ENCODE measurements at regions of chr11 and their contacts with region 1.

Region 1: GRCh38 chr11:61446211-61446651 is 16.3 kb downstream of the SDHAF2 start:
- DNase-seq: peak; percentile 98
- ATAC-seq: peak; percentile 99
- H3K4me3 ChIP-seq: no peak overlapping the region
- H3K27ac ChIP-seq: no peak overlapping the region
- H3K4me1 ChIP-seq: 0 out of 2 replicates have a peak, but pooled peaks cover 3% of the 10 kb centered on the region
- H3K27me3 ChIP-seq: no peaks in the 10 kb centered on the region
- CTCF ChIP-seq: peak; percentile 98

Region 2: GRCh38 chr11:61472282-61472681 is 26.1 kb after region 1 on chr11:
- CTCF ChIA-PET with region 1: interaction called, 12 read pairs
- POLR2A ChIA-PET with region 1: no interaction called
- intact Hi-C with region 1: loop called (anchors 2 kb)
- DNase-seq: no peak
- ATAC-seq: no peak
- H3K4me3 ChIP-seq: no peak overlapping the region
- H3K27ac ChIP-seq: no peak overlapping the region
- H3K4me1 ChIP-seq: peaks cover 4% of the 10 kb centered on the region; the same call in 1 of the 2 replicates
- H3K27me3 ChIP-seq: no peaks in the 10 kb centered on the region
- CTCF ChIP-seq: no peak

Region 3: DNA sequence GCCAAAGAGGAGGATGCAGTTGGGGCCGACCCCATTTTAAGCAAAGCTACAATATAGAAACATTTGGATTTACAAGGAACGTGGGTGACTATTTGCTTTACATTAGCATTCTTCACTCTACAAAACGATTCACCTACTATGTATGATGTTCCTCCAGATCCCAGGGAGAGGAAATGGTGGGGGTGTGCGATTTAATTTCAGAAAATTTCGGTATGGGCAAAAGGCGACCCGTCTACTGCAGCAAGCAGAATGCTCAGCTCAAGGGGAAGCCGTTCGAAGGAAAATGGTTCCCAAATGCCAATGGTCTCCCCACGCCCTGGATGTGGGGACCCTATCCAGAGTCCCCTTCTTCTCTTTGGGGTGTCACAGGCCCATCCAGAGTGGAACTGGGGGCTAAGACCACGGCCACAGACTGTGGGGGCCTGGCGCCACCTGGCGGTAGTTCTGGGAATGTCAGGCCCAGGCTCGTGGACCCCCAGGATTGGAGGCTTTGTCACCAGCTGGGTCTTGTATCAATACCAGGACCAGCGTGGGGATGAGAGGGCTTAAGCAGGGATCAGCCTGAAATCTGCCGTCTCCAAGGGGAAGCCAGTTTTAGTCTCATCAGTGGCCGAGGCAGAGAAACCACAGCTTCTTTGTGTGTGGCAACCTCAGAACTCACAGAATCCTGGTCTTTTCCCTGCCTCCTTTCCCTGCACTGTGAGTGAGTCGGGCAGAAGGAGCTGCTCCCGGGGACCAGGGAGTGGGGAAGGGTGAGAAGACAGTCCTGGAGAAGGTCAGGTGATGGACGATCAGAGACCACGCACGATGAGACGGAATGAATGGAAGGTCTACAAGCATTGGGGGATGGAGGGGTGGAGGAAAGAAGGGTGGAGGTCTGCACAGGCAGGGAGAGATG is 70.7 kb after region 1 on chr11:
- CTCF ChIA-PET with region 1: interaction called, 12 read pairs
- POLR2A ChIA-PET with region 1: no interaction called
- intact Hi-C with region 1: loop called (anchors 2 kb)
- DNase-seq: peak; percentile 43
- ATAC-seq: peak; percentile 28; the same call in 1 of the 2 replicates
- H3K4me3 ChIP-seq: no peak overlapping the region
- H3K27ac ChIP-seq: no peak overlapping the region
- H3K4me1 ChIP-seq: peaks cover 11% of the 10 kb centered on the region
- H3K27me3 ChIP-seq: no peaks in the 10 kb centered on the region
- CTCF ChIP-seq: peak; percentile 99

Region 4: GRCh38 chr11:61627567-61628445 is 181.6 kb after region 1 on chr11:
- CTCF ChIA-PET with region 1: no interaction called
- POLR2A ChIA-PET with region 1: no interaction called
- intact Hi-C with region 1: loop called (anchors 2 kb)
- DNase-seq: peak; percentile 89
- ATAC-seq: peak; percentile 78
- H3K4me3 ChIP-seq: no peak overlapping the region
- H3K27ac ChIP-seq: peak overlapping the region; percentile 85
- H3K4me1 ChIP-seq: peaks cover 23% of the 10 kb centered on the region
- H3K27me3 ChIP-seq: no peaks in the 10 kb centered on the region
- CTCF ChIP-seq: peak; percentile 98

Region 5: DNA sequence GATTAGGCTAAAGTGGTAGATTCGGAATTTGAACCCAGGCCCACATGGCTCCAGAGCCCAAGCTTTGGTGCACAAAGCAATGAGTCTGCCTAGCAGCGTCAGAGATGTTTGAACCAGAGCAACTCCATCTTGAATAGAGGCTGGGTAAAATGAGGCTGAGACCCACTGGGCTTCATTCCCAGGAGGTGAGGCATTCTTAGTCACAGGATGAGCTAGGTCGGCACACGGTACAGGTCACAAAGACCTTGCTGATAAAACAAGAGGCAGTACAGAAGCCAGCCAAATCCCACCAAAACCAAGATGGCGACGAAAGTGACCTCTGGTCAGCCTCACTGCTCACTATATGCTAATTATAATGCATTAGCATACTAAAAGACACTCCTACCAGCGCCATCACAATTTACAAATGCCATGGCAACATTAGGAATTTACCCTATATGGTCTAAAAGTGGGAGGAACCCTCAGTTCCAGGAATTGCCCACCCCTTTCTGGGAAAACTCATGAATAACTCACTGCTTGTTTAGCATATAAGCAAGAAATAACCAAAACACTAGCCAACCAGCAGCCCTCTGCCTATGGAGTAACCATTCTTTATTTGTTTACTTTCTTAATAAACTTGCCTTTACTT is 193.7 kb after region 1 on chr11:
- CTCF ChIA-PET with region 1: interaction called, 10 read pairs
- POLR2A ChIA-PET with region 1: no interaction called
- intact Hi-C with region 1: loop called (anchors 1 kb)
- DNase-seq: peak; percentile 72
- ATAC-seq: peak; percentile 16; the same call in 1 of the 2 replicates
- H3K4me3 ChIP-seq: no peak overlapping the region
- H3K27ac ChIP-seq: no peak overlapping the region
- H3K4me1 ChIP-seq: peaks cover 18% of the 10 kb centered on the region
- H3K27me3 ChIP-seq: no peaks in the 10 kb centered on the region
- CTCF ChIP-seq: no peak

Measured in PC-3 (cell line).